ENCODE measurements at regions of chr19 and their contacts with region 1.

Region 1: GRCh38 chr19:34041925-34042521 is 130.3 kb upstream of the LSM14A start:
- DNase-seq: peak; percentile 87
- ATAC-seq: no peak

Region 2: DNA sequence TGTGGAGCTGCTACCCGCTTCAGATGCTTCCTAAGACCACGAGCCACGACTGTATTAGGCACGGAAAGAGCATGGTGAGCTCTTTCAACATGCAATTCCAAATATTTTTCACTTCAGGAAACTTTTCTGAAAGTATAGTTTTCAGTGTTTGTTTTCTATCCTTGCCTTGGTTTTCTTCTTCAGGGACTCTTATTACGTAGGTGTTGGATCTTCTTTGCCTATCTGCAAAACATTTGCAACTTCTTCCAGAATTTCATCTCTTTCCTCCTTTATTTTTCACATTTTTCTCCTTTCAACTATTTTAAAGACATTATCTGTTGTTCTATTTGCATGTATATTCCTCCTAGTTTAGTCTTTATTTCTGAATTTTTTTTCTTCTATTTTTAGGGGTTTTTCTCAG is 18.6 kb before region 1 on chr19:
- intact Hi-C with region 1: no loop called
- DNase-seq: no peak
- ATAC-seq: no peak

Region 3: DNA sequence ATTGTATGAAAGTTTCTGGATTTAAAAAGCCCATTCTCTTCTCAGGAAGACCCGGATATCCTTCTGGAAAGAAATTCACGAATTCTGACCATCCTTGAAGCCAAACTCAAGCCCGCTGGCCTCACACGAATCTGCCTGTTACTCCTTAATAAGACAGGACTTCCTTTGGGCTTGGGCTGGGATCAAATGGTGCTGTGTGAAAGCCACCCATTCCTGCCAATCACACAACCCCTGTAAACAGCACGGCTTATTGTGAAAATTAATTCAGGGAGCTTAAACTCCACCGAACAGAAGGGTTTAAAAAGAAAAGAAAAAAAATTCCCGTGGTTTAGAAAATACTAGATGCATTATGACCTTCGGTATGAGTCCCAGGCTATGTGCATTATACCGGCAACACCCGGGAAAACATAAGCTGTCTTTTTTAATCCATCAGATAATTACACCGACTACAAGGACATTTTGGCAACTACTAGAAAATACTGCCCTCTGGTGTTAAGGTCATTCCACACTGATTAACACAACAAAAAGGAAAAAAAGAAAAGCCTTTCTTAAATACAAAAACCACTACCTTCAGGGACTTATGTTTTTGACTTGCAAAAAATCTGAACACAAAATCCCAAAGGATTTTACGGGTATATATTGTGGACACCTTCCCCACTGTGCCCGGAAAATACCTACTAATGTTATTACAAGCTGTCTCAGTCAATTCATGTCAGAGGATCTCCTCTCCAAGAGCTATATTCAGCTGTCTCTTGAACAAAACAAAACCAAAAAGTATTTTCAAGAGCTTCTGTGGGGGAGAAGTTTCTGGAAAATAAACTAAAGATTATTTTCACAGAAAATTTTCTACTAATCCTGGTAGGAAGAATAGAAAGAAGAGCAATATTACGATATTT is 54.2 kb after region 1 on chr19:
- intact Hi-C with region 1: loop called (anchors 5 kb)
- DNase-seq: no peak
- ATAC-seq: no peak

Region 4: GRCh38 chr19:34145741-34146202 is 103.7 kb after region 1 on chr19:
- intact Hi-C with region 1: loop called (anchors 5 kb)
- DNase-seq: no peak
- ATAC-seq: no peak

Region 5: DNA sequence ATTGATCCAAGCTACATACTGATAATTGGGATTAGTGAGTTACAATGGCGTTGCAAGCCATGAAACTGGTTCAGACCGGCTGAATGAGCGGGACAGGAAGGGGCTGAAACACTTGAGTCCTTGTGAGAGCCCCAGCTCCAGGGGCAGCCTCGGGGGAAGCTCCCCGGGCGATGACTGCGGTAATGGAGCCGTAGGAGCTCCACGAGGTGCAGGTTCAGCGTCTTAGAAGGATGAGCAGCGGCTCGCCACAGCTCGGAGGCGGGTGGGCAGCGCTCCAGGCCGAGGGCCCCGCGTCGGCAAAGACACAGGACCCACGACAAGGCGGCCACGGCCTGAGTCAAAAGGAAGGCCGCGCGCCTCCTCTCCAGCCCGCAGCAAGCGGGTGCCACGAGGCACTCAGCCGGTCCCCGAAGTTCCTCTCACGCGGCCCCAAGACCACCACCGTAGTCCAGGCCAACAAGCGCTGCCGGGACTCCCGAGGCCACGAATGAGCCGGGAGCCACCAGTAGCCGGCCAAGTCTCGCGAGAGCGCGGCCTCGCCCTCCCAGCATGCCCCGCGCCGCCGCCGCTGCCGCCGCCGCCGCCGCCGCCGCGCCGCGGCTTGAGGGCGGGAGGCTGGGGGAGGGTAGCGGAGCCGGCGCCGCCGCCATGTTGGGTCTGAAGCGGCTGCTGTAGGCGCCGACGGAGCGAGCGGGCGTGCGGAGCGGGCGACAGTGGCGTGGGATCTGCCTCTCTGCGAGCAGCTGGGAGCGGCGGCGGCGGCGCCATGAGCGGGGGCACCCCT is 130.0 kb after region 1 on chr19 and contains the start of gene LSM14A:
- intact Hi-C with region 1: no loop called
- DNase-seq: peak; percentile 98
- ATAC-seq: peak; percentile 93
- total RNA-seq, gene LSM14A: 70.6 TPM

Measured in Right ventricle myocardium inferior (tissue), 1 donor.